ENCODE measurements at regions of chr1 and their contacts with region 1.

Region 1: GRCh38 chr1:184982002-184982954 is 8.0 kb upstream of the NIBAN1 start:
- DNase-seq: peak; percentile 88
- ATAC-seq: peak; percentile 99
- H3K4me3 Mint-ChIP-seq: no peak overlapping the region
- H3K27ac Mint-ChIP-seq: no peak overlapping the region
- H3K4me1 Mint-ChIP-seq: peaks cover 4% of the 10 kb centered on the region
- H3K27me3 Mint-ChIP-seq: peaks cover 16% of the 10 kb centered on the region

Region 2: DNA sequence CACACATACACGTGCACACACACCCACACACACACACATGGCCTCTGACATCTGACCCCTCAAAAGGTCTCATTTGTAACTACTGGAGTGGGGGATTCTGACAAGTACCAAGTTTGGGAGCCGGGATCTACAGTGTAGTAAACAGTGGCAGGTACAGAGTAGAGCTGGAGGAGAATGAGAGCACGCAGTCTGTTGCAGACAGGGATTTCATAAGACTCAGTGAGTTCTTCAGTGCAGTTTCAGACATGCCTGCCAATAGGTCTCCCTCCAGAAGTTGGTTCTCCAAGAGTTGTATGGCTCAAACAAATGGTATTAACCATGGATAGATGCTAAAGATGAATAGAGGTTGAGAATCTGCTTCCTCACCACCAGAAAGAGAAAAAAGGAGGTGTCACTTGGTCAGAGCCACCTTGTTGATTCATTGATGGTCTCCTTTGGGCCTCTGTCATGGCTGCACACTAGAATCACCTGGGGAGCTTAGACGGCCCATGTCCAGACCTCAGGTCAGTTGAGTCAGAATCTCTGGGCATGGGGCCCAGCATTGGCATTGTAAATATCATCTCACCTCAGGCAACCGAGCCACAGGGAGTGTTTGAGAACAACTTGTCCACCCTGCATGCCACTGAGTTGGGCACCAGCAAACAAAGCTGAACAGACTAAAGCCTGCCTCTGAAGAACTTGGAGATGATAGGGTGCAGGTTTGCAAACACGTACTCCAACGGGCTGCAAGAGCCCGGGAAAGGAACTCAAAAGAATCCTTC is 349.7 kb before region 1 on chr1:
- CTCF ChIA-PET with region 1: no interaction called
- POLR2A ChIA-PET with region 1: no interaction called
- intact Hi-C with region 1: no loop called
- DNase-seq: no peak
- ATAC-seq: no peak
- H3K4me3 Mint-ChIP-seq: no peak overlapping the region
- H3K27ac Mint-ChIP-seq: no peak overlapping the region
- H3K4me1 Mint-ChIP-seq: no peaks in the 10 kb centered on the region
- H3K27me3 Mint-ChIP-seq: no peaks in the 10 kb centered on the region

Region 3: DNA sequence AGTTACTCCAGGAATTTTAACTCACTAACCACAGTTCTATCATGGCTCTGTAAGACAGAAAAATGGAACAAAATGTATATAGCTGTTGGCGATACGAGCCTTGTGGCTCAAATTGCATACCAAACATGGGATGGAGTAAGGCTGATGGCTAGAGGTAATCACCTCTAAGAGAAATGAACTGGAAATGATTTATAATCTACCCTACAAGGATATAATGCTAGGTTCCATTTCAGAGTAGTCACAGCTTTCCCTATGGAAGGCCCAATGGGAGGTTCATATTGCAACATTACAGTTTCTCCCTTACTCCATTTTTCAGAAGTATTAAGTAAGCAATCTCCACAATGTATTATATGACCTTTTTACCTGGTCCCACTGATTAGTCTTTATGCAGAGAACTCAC is 289.3 kb before region 1 on chr1:
- CTCF ChIA-PET with region 1: no interaction called
- POLR2A ChIA-PET with region 1: no interaction called
- intact Hi-C with region 1: no loop called
- DNase-seq: no peak
- ATAC-seq: no peak
- H3K4me3 Mint-ChIP-seq: no peak overlapping the region
- H3K27ac Mint-ChIP-seq: no peak overlapping the region
- H3K4me1 Mint-ChIP-seq: peaks cover 8% of the 10 kb centered on the region
- H3K27me3 Mint-ChIP-seq: no peaks in the 10 kb centered on the region

Region 4: GRCh38 chr1:184966989-184967388 is 15.3 kb before region 1 on chr1:
- CTCF ChIA-PET with region 1: interaction called, 13 read pairs
- POLR2A ChIA-PET with region 1: no interaction called
- intact Hi-C with region 1: no loop called
- DNase-seq: no peak
- ATAC-seq: no peak
- H3K4me3 Mint-ChIP-seq: no peak overlapping the region
- H3K27ac Mint-ChIP-seq: peak overlapping the region; percentile 64
- H3K4me1 Mint-ChIP-seq: peaks cover 31% of the 10 kb centered on the region
- H3K27me3 Mint-ChIP-seq: no peaks in the 10 kb centered on the region

Region 5: GRCh38 chr1:185033686-185034085 is 51.4 kb after region 1 on chr1:
- CTCF ChIA-PET with region 1: no interaction called
- POLR2A ChIA-PET with region 1: no interaction called
- intact Hi-C with region 1: no loop called
- DNase-seq: no peak
- ATAC-seq: no peak
- H3K4me3 Mint-ChIP-seq: no peak overlapping the region
- H3K27ac Mint-ChIP-seq: no peak overlapping the region
- H3K4me1 Mint-ChIP-seq: no peaks in the 10 kb centered on the region
- H3K27me3 Mint-ChIP-seq: no peaks in the 10 kb centered on the region

Region 6: DNA sequence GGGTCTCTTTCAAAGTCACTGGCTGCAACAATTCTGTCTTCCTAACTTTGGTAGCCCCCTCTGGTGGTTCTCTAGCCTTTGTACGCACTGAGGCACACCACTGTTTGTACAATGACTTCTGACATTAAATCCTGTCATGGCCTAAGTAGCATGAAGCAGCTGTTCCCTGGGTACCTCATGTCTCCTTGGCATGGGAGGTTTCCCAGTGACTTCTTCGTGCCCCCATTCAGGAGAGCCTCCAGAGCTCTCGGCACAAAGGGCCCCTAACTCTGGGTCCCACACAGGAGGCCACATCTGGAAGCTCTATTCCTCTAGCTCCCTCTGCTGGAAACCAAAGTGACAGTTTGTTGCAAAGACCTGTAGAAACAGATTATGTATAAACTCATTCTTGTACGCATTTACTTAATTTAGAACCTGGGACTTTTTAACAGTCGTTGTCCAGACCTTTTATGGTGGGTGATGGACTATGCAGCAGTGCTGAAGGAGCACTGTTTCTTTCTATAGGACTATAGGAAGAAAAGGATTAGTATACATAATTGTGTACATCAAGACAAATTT is 188.1 kb after region 1 on chr1:
- CTCF ChIA-PET with region 1: interaction called, 7 read pairs
- POLR2A ChIA-PET with region 1: no interaction called
- intact Hi-C with region 1: loop called (anchors 2 kb)
- DNase-seq: peak; percentile 53
- ATAC-seq: peak; percentile 89
- H3K4me3 Mint-ChIP-seq: no peak overlapping the region
- H3K27ac Mint-ChIP-seq: no peak overlapping the region
- H3K4me1 Mint-ChIP-seq: peaks cover 7% of the 10 kb centered on the region
- H3K27me3 Mint-ChIP-seq: no peaks in the 10 kb centered on the region